ENCODE measurements at regions of chr4 and their contacts with region 1.

Region 1: GRCh38 chr4:113547487-113548042 is 214.0 kb downstream of the CAMK2D start:
- DNase-seq: peak; percentile 87 to 91
- ATAC-seq: peak; percentile 98 to 99 (median 98)
- H3K4me3 ChIP-seq: no peak overlapping the region
- H3K27ac ChIP-seq: peak overlapping the region; percentile 69
- H3K4me1 ChIP-seq: peaks cover 20% of the 10 kb centered on the region
- H3K27me3 ChIP-seq: no peaks in the 10 kb centered on the region
- CTCF ChIP-seq: peak; percentile 97

Region 2: GRCh38 chr4:113179996-113180395 is 367.6 kb before region 1 on chr4:
- intact Hi-C with region 1: no loop called
- DNase-seq: no peak
- ATAC-seq: peak; percentile 60 to 85 (median 80)
- H3K4me3 ChIP-seq: peak overlapping the region; percentile 29
- H3K27ac ChIP-seq: peak overlapping the region; percentile 76
- H3K4me1 ChIP-seq: peaks cover 55% of the 10 kb centered on the region
- H3K27me3 ChIP-seq: no peaks in the 10 kb centered on the region
- CTCF ChIP-seq: no peak

Region 3: DNA sequence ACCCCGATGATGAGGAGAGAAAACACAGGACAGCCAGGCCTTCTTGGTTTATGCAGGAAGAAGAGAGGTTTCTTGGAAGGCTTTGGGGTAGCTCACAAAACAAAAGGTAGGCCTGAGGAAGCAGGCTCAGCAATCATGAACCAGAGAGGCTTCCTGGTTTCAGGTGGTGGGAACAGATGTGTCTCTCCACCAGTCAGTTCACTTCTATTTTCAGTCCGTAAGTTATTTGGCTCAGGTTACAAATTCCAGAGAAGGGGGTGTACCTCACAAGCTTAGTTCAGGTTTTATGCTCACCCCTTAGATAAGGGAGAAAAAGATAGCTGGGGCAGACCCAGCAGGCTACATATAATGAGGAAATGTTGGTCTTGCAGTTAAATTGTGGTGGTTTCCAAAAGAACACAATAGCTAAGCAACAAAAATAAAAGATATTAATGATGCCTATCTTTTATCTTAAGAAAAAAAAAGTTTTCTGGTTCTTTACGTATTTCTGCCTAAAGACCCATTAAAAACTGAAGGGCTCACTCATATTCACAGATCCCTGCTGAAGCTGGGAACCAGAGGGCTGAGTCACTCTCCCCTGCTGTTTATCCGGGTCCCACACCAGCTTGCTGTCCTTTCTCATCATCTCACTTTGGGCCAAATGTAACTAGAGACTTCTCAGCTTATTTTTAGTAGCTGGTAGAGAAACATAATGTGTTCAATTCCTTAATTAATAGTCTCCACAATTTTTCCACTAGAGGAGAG is 37.0 kb after region 1 on chr4:
- intact Hi-C with region 1: loop called in 1 of 2 experiments (anchors 5 kb)
- DNase-seq: peak in 1 of 2 donors; percentile 57
- ATAC-seq: peak; percentile 82 to 95 (median 91)
- H3K4me3 ChIP-seq: peak overlapping the region; percentile 29
- H3K27ac ChIP-seq: peak overlapping the region; percentile 89
- H3K4me1 ChIP-seq: peaks cover 57% of the 10 kb centered on the region
- H3K27me3 ChIP-seq: no peaks in the 10 kb centered on the region
- CTCF ChIP-seq: no peak

Region 4: GRCh38 chr4:113761620-113762185 is 214.1 kb after region 1 on chr4 and contains the start of gene CAMK2D:
- intact Hi-C with region 1: loop called (anchors 2 to 5 kb)
- DNase-seq: peak; percentile 74 to 93
- ATAC-seq: peak; percentile 83 to 85 (median 84)
- H3K4me3 ChIP-seq: peak within 1 kb of the TSS; percentile 88
- H3K27ac ChIP-seq: peak within 1 kb of the TSS; percentile 97
- H3K4me1 ChIP-seq: peaks cover 28% of the 10 kb centered on the region
- H3K27me3 ChIP-seq: no peaks in the 10 kb centered on the region
- CTCF ChIP-seq: peak; percentile 42
- total RNA-seq, gene CAMK2D: 83.8 to 183 (median 145) TPM

Region 5: DNA sequence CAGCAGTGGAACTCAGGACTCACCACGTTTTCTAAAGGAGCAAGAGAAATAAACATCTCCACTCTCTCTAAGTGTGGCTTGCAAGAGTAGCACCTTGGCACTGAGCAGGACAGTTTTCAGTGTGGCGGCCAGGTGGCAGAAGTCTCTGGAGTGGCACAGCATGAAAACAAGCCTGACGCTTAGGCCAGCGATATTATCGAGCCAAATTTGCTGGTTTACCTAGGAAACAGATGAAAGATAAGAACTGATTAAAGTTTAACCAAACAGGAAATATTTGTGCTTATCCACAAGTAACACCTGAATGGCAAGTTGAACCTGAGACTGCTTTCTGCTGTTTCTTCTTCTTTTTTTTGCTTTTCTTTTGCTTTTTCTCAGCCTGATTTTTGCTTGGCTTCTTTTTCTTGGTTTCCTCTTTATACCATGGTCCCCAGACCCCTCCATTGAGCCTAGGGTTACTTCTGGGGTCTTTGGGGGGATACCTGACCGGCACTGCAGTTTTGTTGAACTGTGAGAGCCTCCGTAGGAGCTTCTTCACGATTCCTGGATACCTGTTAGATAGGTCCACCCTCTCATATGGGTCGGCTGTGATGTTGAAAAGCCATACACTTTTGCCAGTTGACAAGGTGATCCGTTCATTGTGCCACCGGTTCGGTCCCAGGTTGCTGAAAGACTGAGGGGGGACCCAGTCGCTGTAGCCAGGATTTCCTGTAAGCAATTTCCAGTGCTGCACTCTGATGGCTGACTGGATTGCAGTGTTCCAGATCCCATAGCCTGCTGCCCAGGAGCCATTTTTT is 354.6 kb after region 1 on chr4:
- intact Hi-C with region 1: loop called in 1 of 2 experiments (anchors 10 kb)
- DNase-seq: no peak
- ATAC-seq: no peak
- H3K4me3 ChIP-seq: no peak overlapping the region
- H3K27ac ChIP-seq: no peak overlapping the region
- H3K4me1 ChIP-seq: no peaks in the 10 kb centered on the region
- H3K27me3 ChIP-seq: no peaks in the 10 kb centered on the region
- CTCF ChIP-seq: no peak

Measured in psoas muscle (tissue), 8 donors.